ENCODE measurements at regions of chr5 and their contacts with region 1.

Region 1: DNA sequence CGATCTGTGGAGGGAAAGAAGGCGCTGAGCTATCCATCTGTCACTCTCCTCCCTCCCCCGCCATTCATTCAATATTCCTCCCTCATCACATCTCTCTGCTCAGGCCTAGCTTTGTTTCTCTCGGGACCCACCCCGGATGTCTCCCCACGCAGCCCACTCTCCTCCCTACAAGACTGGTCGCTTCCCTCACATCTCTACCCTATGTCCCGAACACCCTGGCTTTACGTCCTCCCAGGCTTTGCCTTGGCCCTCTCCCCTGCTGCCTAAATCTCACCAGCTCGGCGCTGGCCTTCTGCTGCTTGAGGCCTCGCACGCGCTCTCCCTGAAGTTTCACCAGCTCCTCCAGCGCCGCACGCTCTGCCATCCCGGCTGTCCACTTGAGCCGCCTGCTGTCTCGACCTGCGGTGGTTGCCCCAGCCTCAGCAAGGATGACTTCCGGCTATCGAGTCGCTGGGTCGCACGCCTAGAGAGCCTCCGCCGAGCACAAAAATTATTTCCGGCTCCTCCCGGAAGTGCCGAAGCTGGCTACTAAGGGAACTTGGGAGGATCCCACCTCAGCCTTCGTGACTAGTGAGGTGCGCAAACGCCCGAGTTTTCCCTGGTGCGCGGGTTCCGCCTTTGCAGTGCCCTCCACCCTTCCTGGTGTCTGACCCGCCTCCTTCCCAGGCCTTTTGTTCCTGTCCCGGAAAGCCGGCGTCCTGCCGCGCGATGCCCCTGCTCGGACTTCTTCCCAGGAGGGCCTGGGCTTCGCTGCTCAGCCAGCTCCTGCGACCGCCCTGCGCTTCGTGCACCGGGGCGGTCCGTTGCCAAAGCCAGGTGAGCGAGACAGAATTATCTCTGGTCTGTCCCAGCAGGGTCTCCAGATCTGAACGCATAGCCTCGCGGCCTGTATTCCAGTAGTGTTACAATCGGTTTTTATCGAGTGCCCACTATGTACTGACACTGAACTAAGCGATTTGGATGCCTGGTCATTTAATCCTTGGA is at the starts of genes HARS1 and HARS2:
- H3K4me3 Mint-ChIP-seq: peak within 1 kb of the TSS; percentile 98
- H3K27ac Mint-ChIP-seq: peak within 1 kb of the TSS; percentile 92
- H3K4me1 Mint-ChIP-seq: peaks cover 26% of the 10 kb centered on the region
- H3K27me3 Mint-ChIP-seq: no peaks in the 10 kb centered on the region

Region 2: GRCh38 chr5:140322751-140323731 is 368.2 kb before region 1 on chr5:
- intact Hi-C with region 1: no loop called
- H3K4me3 Mint-ChIP-seq: no peak overlapping the region
- H3K27ac Mint-ChIP-seq: no peak overlapping the region
- H3K4me1 Mint-ChIP-seq: peaks cover 70% of the 10 kb centered on the region
- H3K27me3 Mint-ChIP-seq: peaks cover 3% of the 10 kb centered on the region

Region 3: GRCh38 chr5:140401362-140402257 is 289.6 kb before region 1 on chr5 and contains the start of gene ANKHD1:
- intact Hi-C with region 1: loop called (anchors 10 kb)
- H3K4me3 Mint-ChIP-seq: no peak within 1 kb of the TSS
- H3K27ac Mint-ChIP-seq: no peak within 1 kb of the TSS
- H3K4me1 Mint-ChIP-seq: peaks cover 36% of the 10 kb centered on the region
- H3K27me3 Mint-ChIP-seq: no peaks in the 10 kb centered on the region

Region 4: DNA sequence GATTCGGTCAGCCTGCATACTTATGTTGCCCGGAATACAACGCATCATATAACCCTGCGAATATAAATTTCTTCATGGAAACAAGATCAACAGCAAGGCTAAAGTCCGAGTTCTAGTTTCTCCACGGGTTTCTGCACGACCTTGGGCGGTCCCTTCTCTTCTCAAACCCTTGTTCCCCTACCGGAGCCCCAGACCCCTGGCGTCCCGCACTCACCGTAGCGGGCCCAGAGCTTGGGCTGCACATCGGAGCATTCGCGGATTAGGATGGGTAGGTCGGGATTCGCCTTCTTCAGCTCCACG is 44.2 kb before region 1 on chr5:
- intact Hi-C with region 1: loop called (anchors 5 kb)
- H3K4me3 Mint-ChIP-seq: peak overlapping the region; percentile 95
- H3K27ac Mint-ChIP-seq: peak overlapping the region; percentile 97
- H3K4me1 Mint-ChIP-seq: peaks cover 29% of the 10 kb centered on the region
- H3K27me3 Mint-ChIP-seq: no peaks in the 10 kb centered on the region